ENCODE measurements at regions of chr5 and their contacts with region 1.

Region 1: DNA sequence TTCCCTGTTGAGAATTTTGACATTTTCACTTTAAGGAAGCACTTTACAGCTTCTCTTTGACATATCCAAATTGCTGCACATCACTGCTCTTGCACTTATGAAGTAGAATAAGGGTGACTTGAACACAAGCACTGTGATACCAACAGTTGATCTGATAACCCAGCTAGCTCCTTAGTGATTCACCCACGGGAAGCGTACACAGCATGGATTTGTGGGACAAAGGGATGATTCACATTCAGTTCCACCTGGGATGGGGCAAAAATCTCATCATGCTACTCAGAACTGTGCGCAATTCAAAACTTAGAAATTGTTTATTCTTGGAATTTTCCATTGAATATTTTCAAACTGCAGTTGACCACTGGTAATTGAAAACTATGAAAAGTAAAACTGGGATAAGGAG is 1565.5 kb upstream of the CDH9 start:
- DNase-seq: no peak
- H3K4me3 ChIP-seq: no peak overlapping the region
- CTCF ChIP-seq: no peak

Region 2: GRCh38 chr5:28648108-28648507 is 44.2 kb after region 1 on chr5:
- in situ Hi-C with region 1: loop called (anchors 5 kb)
- DNase-seq: no peak
- H3K4me3 ChIP-seq: no peak overlapping the region
- CTCF ChIP-seq: peak; percentile 21

Measured in astrocyte of the cerebellum (primary cell).